ENCODE measurements at regions of chr13 and their contacts with region 1.

Region 1: DNA sequence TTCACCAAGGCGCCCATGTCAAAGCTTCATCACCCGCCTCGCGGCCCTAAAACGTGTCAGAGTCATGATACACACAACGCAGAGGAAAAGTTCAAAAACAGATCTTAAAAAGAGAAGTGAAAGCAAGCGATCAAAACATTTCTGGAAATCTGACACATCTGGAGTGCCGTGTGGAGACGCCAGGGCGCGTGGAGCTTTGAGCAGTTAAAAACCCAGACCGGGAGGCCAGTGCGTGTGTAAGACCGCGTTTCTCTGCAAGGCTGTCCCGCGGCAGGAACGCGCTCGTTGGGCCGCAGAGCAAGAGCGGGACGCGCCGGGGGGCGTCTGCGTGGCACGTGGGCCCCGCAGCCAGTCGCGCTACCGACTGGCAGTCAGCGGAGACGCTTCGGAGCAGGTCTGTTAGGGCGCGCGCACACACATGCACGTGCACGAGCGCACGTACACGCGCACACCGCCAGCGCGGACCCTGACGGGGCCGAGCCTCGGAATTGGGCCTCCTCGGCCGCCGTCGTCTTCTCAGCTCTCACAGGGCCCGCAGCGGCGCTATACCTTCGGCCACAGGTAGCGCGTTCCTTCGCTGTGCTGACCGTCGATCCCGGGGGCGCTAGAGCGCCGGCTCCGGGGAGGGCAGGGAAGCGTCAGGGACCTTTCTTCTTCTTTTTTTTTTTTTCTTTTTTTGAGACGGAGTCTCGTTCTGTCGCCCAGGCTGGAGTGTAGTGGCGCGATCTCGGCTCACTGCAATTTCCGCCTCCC is 35.8 kb downstream of the RNF6 start:
- DNase-seq: peak; percentile 88 to 93 (median 91)
- H3K4me3 ChIP-seq: peak overlapping the region; percentile 80 to 82
- H3K4me3 Mint-ChIP-seq: peak overlapping the region; percentile 89 to 99 (median 94)
- H3K27ac ChIP-seq: peak overlapping the region; percentile 60
- H3K27ac Mint-ChIP-seq: peak overlapping the region; percentile 91 to 98 (median 96)
- H3K4me1 ChIP-seq: peaks cover 18% of the 10 kb centered on the region
- H3K4me1 Mint-ChIP-seq: peaks cover 12 to 33% (median 27%) of the 10 kb centered on the region in 4 donors
- H3K27me3 ChIP-seq: no peaks in the 10 kb centered on the region
- H3K27me3 Mint-ChIP-seq: no peaks in the 10 kb centered on the region

Region 2: GRCh38 chr13:25301347-25302047 is 884.8 kb before region 1 on chr13 and contains the start of gene NUP58:
- CTCF ChIA-PET with region 1: no interaction called
- POLR2A ChIA-PET with region 1: no interaction called
- intact Hi-C with region 1: loop called (anchors 1 kb)
- DNase-seq: peak; percentile 92 to 96 (median 93)
- H3K4me3 ChIP-seq: peak within 1 kb of the TSS; percentile 86 to 93
- H3K4me3 Mint-ChIP-seq: peak within 1 kb of the TSS; percentile 91 to 97 (median 92)
- H3K27ac ChIP-seq: peak within 1 kb of the TSS; percentile 96
- H3K27ac Mint-ChIP-seq: peak within 1 kb of the TSS; percentile 93 to 97 (median 97)
- H3K4me1 ChIP-seq: peaks cover 27% of the 10 kb centered on the region
- H3K4me1 Mint-ChIP-seq: peaks cover 19 to 50% (median 37%) of the 10 kb centered on the region in 4 donors
- H3K27me3 ChIP-seq: peaks cover 5% of the 10 kb centered on the region
- H3K27me3 Mint-ChIP-seq: peaks cover 3 to 6% of the 10 kb centered on the region in 2 donors
- total RNA-seq, gene NUP58: 42.9 to 43.3 TPM

Region 3: GRCh38 chr13:26221721-26222519 is 35.6 kb after region 1 on chr13 and contains the start of gene RNF6:
- CTCF ChIA-PET with region 1: interaction called, 27 read pairs
- POLR2A ChIA-PET with region 1: interaction called, 63 read pairs
- intact Hi-C with region 1: loop called (anchors 1 kb)
- DNase-seq: peak; percentile 88 to 95 (median 91)
- H3K4me3 ChIP-seq: peak within 1 kb of the TSS; percentile 86 to 98
- H3K4me3 Mint-ChIP-seq: peak within 1 kb of the TSS; percentile 95 to 100 (median 100)
- H3K27ac ChIP-seq: peak within 1 kb of the TSS; percentile 94
- H3K27ac Mint-ChIP-seq: peak within 1 kb of the TSS; percentile 92 to 99 (median 99)
- H3K4me1 ChIP-seq: peaks cover 29% of the 10 kb centered on the region
- H3K4me1 Mint-ChIP-seq: peaks cover 28 to 48% (median 41%) of the 10 kb centered on the region in 4 donors
- H3K27me3 ChIP-seq: no peaks in the 10 kb centered on the region
- H3K27me3 Mint-ChIP-seq: peaks cover 0 to 2% of the 10 kb centered on the region in 2 donors
- total RNA-seq, gene RNF6: 46.7 to 47.9 TPM

Region 4: DNA sequence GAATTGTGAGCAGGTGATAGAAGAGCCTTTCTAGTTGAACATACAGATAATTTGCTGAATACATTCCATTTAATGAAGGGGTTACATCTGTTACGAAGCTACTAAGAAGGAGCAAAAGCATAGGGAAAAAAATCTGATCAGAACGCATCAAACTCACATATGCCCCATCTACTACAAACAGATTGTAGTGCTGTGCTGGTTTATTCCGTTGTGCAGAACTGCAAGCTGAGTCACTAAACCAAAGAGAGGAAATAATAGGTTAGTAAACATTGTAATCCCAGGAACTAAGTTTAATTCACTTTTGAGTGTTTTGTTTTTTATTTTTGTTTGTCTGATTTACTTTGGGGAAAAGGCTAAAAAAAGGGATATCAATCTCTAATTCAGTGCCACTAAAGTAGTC is 203.9 kb after region 1 on chr13:
- CTCF ChIA-PET with region 1: interaction called, 4 read pairs
- POLR2A ChIA-PET with region 1: no interaction called
- intact Hi-C with region 1: loop called (anchors 10 kb)
- DNase-seq: no peak
- H3K4me3 ChIP-seq: no peak overlapping the region
- H3K4me3 Mint-ChIP-seq: no peak overlapping the region
- H3K27ac ChIP-seq: no peak overlapping the region
- H3K27ac Mint-ChIP-seq: no peak overlapping the region
- H3K4me1 ChIP-seq: no peaks in the 10 kb centered on the region
- H3K4me1 Mint-ChIP-seq: no peaks in the 10 kb centered on the region
- H3K27me3 ChIP-seq: no peaks in the 10 kb centered on the region
- H3K27me3 Mint-ChIP-seq: no peaks in the 10 kb centered on the region

Region 5: DNA sequence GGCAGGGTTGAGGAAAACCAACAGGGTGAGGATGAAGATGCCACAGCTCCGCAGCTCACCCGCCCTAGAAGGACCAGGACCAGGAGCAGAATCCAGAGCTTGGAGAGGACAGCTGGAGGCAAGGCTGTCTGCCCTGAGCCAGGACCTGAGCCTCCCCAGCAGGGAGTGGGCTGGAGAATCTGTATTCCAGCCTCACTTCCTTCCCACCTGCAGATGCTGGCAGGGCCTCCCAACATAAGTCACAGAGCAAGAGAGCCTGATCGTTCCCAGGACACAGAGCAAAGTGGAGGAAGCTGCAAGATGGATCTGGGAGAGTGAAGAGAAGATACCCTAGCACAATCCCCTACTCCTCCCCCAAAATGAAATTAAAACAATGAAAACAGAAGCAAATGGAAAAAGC is 309.5 kb after region 1 on chr13:
- CTCF ChIA-PET with region 1: interaction called, 282 read pairs
- POLR2A ChIA-PET with region 1: interaction called, 12 read pairs
- intact Hi-C with region 1: no loop called
- DNase-seq: no peak
- H3K4me3 ChIP-seq: no peak overlapping the region
- H3K4me3 Mint-ChIP-seq: no peak overlapping the region
- H3K27ac ChIP-seq: no peak overlapping the region
- H3K27ac Mint-ChIP-seq: peak overlapping the region in 1 of 7 donors; percentile 53
- H3K4me1 ChIP-seq: no peaks in the 10 kb centered on the region
- H3K4me1 Mint-ChIP-seq: no peaks in the 10 kb centered on the region
- H3K27me3 ChIP-seq: no peaks in the 10 kb centered on the region
- H3K27me3 Mint-ChIP-seq: peaks cover 9 to 12% of the 10 kb centered on the region in 2 donors

Region 6: DNA sequence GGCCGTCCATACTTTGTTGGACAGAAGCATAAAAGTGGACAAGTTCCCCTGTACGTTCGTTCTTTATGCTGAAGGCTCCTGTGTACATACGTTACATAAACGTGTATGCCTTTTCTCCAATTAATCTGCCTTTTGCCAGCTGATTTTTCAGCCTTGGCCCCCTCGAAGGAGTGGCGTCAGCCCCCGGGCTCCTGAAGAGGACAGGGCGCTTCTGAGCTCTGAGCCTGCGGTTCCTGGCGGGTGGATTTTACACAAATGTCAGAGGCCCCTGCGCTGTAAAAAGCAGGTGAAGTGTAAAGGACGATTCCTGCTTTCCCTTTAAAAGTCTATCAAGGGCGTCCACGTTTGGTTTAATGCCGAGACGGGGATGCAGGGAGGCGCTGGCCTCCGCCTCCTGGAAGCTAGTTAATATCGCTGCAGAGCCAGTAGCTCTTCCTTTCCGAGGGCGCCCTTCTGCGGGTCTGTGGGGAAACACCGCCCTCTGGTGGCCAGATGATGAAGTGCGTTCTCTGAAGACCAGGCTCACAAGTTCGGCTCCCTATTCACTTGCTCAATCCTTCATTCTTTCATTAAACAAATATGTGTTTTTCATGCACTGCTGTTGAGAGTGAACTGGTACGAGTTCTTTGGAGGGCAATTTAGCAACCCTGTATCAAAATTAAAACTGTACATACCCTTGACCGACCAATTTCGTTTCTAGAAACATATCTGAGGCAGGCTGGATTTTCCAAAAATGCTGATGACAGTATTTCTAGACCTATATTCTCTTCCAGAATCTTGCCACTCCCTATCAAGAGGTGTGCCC is 512.3 kb after region 1 on chr13:
- CTCF ChIA-PET with region 1: interaction called, 177 read pairs
- POLR2A ChIA-PET with region 1: interaction called, 15 read pairs
- intact Hi-C with region 1: loop called (anchors 1 kb)
- DNase-seq: peak; percentile 66 to 74 (median 72)
- H3K4me3 ChIP-seq: no peak overlapping the region
- H3K4me3 Mint-ChIP-seq: peak overlapping the region in 2 of 8 donors; percentile 12 to 43
- H3K27ac ChIP-seq: no peak overlapping the region
- H3K27ac Mint-ChIP-seq: peak overlapping the region in 1 of 7 donors; percentile 11
- H3K4me1 ChIP-seq: peaks cover 4% of the 10 kb centered on the region
- H3K4me1 Mint-ChIP-seq: peaks cover 0 to 3% (median under 1%) of the 10 kb centered on the region in 4 donors
- H3K27me3 ChIP-seq: no peaks in the 10 kb centered on the region
- H3K27me3 Mint-ChIP-seq: peaks cover 3 to 6% of the 10 kb centered on the region in 2 donors

Measured in CD4-positive, alpha-beta memory T cell (primary cell).